BJ (cell line): ENCODE measurements at regions of chr4 and their contacts with region 1.

Region 1: DNA sequence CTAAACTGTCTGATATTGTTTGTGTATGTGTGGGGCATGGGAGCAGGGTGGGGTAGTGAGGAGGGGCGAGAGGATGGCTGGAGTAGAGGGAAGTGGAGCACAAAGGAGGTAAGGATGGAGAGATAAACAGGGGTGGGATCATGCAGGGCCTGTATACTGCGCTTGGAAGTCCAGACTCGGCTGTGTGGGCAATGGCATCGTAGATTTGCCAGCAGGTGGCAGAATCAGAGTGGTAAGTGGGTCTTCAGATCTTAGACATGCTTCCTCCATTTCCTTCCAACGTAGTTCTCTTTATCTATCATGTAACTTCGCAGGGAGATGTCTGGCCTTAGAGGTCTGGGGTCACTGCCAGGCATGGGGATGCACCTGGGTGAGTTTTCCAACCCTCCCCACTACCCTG is 155.5 kb downstream of the PDGFRA start:
- DNase-seq: no peak
- H3K4me3 ChIP-seq: no peak overlapping the region
- H3K27me3 ChIP-seq: no peaks in the 10 kb centered on the region
- CTCF ChIP-seq: peak; percentile 64

Region 2: DNA sequence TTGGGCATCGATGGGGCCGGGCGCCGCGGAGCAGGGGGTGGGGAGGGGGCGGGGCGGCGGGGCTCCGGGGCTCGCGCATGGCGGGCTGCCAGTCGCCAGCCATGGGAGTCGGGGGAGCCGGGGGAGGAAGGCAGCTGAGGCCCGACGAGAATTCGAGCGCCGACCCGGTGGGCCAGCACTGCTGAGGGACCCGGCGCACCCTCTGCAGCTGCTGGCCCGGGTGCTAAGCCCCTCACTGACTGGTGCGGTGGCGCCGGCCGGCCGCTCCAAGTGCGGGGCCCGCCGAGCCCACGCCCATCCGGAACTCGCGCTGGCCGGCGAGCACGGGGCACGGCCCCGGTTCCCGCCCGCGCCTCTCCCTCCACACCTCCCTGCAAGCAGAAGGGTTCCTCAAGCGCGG is 235.2 kb before region 1 on chr4:
- CTCF ChIA-PET with region 1: no interaction called
- POLR2A ChIA-PET with region 1: no interaction called
- DNase-seq: no peak
- H3K4me3 ChIP-seq: no peak overlapping the region
- H3K27me3 ChIP-seq: no peaks in the 10 kb centered on the region
- CTCF ChIP-seq: no peak

Region 3: GRCh38 chr4:54395013-54395527 is 10.5 kb after region 1 on chr4:
- CTCF ChIA-PET with region 1: interaction called, 11 read pairs
- POLR2A ChIA-PET with region 1: no interaction called
- DNase-seq: no peak
- H3K4me3 ChIP-seq: no peak overlapping the region
- H3K27me3 ChIP-seq: no peaks in the 10 kb centered on the region
- CTCF ChIP-seq: no peak

Region 4: GRCh38 chr4:54440394-54441136 is 56.0 kb after region 1 on chr4:
- CTCF ChIA-PET with region 1: interaction called, 10 read pairs
- POLR2A ChIA-PET with region 1: no interaction called
- DNase-seq: no peak
- H3K4me3 ChIP-seq: no peak overlapping the region
- H3K27me3 ChIP-seq: peaks cover 4% of the 10 kb centered on the region; the same call in 1 of the 2 replicates
- CTCF ChIP-seq: peak; percentile 64

Region 5: GRCh38 chr4:54840992-54841768 is 456.6 kb after region 1 on chr4:
- CTCF ChIA-PET with region 1: interaction called, 12 read pairs
- POLR2A ChIA-PET with region 1: no interaction called
- DNase-seq: no peak
- H3K4me3 ChIP-seq: no peak overlapping the region
- H3K27me3 ChIP-seq: peaks cover 3% of the 10 kb centered on the region; the same call in 1 of the 2 replicates
- CTCF ChIP-seq: peak; percentile 52

Region 6: GRCh38 chr4:54961357-54961975 is 576.9 kb after region 1 on chr4:
- CTCF ChIA-PET with region 1: interaction called, 14 read pairs
- POLR2A ChIA-PET with region 1: no interaction called
- DNase-seq: no peak
- H3K4me3 ChIP-seq: no peak overlapping the region
- H3K27me3 ChIP-seq: no peaks in the 10 kb centered on the region; the same call in none of the 2 replicates
- CTCF ChIP-seq: peak; percentile 68